Cardiac septum (tissue), 1 donor: ENCODE measurements at regions of chr22 and their contacts with region 1.

Region 1: DNA sequence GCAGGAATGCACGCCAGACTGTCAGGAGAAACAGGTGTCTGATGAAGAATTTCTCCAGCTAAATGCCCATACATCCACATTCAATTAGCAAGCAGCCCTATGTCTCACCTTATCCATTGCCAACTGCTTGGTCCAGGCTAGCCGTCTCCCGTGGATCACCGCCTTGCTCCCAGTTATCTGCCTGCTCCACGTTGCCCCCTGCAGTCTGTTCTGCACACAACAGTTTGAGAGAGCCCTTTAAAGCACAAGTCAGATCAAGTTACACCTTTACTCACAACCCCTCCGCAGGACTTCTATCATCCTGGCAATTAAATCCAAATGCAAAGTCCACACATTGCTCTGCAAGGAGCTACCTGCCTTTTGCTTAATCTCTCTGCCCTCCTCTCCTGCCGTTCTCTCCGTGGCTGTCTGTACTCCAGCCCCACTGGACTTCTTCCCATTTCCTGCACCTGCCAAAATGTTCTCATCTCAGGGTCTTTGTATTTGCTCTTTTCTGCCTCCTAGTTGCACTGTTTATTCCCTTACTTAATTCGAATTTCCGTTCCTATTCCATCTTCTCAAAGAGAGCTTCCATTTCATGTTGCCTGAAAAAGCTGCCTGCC is 185.3 kb upstream of the LARGE1 start:
- DNase-seq: no peak

Region 2: DNA sequence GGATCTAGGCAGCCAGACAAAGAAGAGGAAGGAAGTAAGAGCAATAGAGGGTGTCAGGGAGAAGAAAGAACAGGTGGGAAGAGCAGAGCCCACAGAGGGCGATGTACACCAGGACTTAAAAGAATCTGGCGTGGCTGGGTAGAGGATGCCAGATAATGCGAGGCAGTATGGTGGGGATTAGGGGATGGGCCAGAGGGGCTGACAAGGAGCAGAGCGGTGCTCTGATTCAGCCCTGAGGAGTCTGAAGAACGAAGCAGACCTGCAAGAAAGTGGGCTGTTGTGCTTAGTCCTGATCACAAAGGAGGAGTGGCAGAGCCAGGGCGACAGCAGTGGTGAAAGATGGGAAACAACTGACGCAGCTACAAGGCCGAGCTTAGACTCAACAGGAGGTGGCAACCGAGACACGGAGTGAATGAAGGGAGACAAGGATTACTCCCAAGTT is 349.0 kb before region 1 on chr22:
- intact Hi-C with region 1: loop called (anchors 10 kb)
- DNase-seq: no peak

Region 3: DNA sequence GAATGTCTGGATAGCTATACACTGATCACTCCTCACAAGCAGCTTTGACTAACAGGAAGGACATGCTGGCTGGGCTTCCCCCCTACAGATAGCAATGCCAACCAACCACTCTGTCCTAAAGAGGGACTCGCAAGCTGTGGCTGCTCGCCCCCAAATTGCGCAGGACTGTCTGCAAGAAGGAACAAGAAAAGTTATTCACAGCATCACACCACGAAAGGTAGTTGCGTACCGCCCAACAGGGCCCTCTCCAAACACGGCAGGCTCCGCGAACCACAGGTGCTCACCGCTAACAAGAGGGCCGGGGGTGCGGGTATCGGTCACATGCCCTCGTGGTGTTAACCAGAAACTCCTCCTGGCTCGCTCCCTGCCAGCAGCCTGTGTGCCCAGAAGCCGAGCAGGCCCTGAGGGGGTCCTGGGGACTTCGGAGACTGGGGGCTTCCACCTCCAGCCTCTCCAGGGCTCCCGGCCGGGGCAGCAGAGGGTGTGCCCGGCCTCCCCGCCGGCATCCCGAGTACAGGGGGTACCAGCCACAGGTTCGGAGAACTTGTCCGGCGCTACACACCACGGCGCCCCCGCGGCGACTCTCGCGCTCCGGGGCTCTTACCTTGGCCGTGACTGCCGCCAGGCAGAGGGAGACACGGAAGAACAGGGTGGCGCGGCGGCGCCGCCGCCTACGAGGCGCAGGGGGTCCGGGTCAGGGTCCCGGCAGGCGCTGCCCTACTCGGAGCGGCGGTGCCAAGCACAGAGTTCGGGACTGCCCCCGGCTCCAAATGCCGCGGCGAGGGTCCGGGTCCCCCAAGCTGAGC is 186.0 kb before region 1 on chr22:
- intact Hi-C with region 1: no loop called
- DNase-seq: peak; percentile 77